Activated T-helper 1 cell treated with anti-CD3 and anti-CD28 coated beads, Interleukin-12 subunit alpha, Interleukin-12 subunit beta, Interleukin-2, Interleukin-4 antibody, amounts not matched to agents 30 ng/mL and 10 ng/mL and 1 ng/mL, durations not matched to agents 14 hours and 24 hours and 36 hours (primary cell): ENCODE measurements at regions of chr5 and their contacts with region 1.

Region 1: GRCh38 chr5:140710899-140711552 is 10.8 kb downstream of the ZMAT2 start:
- DNase-seq: peak; percentile 87
- H3K4me3 Mint-ChIP-seq: peak overlapping the region; percentile 91
- H3K27ac Mint-ChIP-seq: peak overlapping the region; percentile 94
- H3K4me1 Mint-ChIP-seq: peaks cover 22% of the 10 kb centered on the region
- H3K27me3 Mint-ChIP-seq: peaks cover 8% of the 10 kb centered on the region

Region 2: GRCh38 chr5:140690941-140691924 is 19.8 kb before region 1 on chr5 and contains the starts of genes HARS1 and HARS2:
- intact Hi-C with region 1: loop called (anchors 1 kb)
- DNase-seq: peak; percentile 81
- H3K4me3 Mint-ChIP-seq: peak within 1 kb of the TSS; percentile 100
- H3K27ac Mint-ChIP-seq: peak within 1 kb of the TSS; percentile 95
- H3K4me1 Mint-ChIP-seq: peaks cover 50% of the 10 kb centered on the region
- H3K27me3 Mint-ChIP-seq: no peaks in the 10 kb centered on the region
- total RNA-seq, gene HARS1: 112 and 114 TPM in 2 replicates
- total RNA-seq, gene HARS2: 31.2 and 32.7 TPM in 2 replicates

Region 3: DNA sequence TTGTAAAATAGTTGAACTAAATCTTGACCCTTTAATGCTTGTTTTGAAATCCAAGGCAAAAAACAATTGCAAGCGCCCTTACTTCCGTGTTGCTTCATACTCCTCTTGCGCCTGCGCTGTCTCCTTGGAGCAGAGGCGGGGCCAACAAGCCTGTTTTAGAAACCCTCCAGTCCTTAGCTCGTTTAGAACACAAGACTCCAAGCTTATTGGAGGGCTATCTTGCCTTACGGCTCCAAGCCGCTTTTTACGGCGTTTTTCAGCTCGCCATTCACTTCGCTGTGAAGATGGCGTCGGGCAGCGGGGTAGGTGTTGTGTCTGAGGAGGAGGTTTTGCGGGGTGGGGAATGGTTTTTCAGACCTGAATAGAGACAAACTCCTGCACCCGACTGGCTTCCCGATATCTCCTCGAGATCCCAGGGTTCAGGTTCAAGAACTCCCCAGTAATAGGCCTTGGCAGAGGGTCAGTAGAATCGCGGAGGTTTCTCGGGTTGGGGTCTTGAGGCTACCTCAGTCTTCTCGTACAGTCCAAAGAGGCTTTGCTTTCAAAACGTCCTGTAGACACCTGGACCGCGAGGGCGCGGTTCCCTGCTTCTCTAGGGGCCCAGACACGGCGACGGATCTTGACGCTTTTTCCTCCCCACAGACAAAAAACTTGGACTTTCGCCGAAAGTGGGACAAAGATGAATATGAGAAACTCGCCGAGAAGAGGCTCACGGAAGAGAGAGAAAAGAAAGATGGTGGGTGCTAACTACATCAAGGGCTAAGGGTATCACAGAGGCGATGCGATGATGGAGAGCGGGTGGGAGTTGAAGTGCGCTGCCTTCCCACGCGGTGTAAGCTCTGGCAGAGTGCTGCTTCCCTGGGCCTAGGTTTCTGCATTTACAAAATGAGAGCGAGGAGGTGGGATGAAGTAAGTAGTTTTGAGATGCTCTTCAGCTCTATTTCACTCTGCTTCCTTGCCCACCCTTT is 10.6 kb before region 1 on chr5 and contains the start of gene ZMAT2:
- intact Hi-C with region 1: loop called (anchors 1 kb)
- DNase-seq: peak; percentile 92
- H3K4me3 Mint-ChIP-seq: peak within 1 kb of the TSS; percentile 96
- H3K27ac Mint-ChIP-seq: peak within 1 kb of the TSS; percentile 88
- H3K4me1 Mint-ChIP-seq: peaks cover 22% of the 10 kb centered on the region
- H3K27me3 Mint-ChIP-seq: no peaks in the 10 kb centered on the region
- total RNA-seq, gene ZMAT2: 68.0 and 71.2 TPM in 2 replicates

Region 4: DNA sequence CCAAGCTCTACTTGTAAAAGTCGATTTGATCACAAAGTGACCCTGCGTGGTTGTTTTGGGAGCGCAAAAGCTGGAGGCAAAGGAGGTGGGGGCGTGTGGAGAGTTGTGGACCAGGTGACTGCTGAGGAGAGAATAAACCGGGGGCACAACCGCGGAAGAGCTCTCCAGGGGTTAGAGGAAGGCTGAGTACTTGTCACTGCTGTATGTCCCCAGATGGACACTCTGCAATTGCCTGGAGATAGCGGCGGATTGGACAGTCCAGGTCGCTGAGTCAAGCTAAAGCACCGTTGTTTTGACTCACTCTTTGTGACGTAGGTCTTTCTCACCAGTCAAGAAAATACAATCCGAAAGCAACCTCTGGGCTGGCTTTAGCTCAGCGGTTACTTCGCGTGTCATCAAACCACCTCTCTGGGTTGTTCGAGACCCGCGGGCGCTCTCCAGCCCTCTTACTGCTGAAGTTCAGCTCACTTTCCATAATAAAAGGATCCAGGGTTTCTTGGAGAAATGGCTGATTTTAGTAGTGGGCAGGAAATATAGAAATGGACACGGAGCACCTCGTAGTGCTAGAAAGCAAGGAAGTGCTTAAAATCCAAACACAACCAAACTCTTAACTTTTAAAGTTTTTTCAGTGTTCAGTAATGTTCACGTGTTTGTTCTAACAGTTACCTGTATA is 14.9 kb after region 1 on chr5:
- intact Hi-C with region 1: loop called (anchors 1 kb)
- DNase-seq: peak; percentile 72
- H3K4me3 Mint-ChIP-seq: peak overlapping the region; percentile 77
- H3K27ac Mint-ChIP-seq: peak overlapping the region; percentile 91
- H3K4me1 Mint-ChIP-seq: peaks cover 11% of the 10 kb centered on the region
- H3K27me3 Mint-ChIP-seq: peaks cover 21% of the 10 kb centered on the region

Region 5: GRCh38 chr5:141040771-141041426 is 329.9 kb after region 1 on chr5:
- intact Hi-C with region 1: no loop called
- DNase-seq: peak; percentile 42
- H3K4me3 Mint-ChIP-seq: no peak overlapping the region
- H3K27ac Mint-ChIP-seq: no peak overlapping the region
- H3K4me1 Mint-ChIP-seq: no peaks in the 10 kb centered on the region
- H3K27me3 Mint-ChIP-seq: no peaks in the 10 kb centered on the region